HCT116 (cell line): ENCODE measurements at regions of chr4 and their contacts with region 1.

Region 1: GRCh38 chr4:74499986-74500781 is 55.2 kb downstream of the AREG start:
- DNase-seq: no peak
- ATAC-seq: no peak
- H3K4me3 ChIP-seq: no peak overlapping the region
- H3K27ac ChIP-seq: no peak overlapping the region
- H3K4me1 ChIP-seq: peaks cover 0 to 5% of the 10 kb centered on the region in 2 experiments; a peak in 1 of 4 replicates
- H3K27me3 ChIP-seq: no peaks in the 10 kb centered on the region
- CTCF ChIP-seq: no peak
- POLR2A ChIP-seq: no peak
- RAD21 ChIP-seq: no peak

Region 2: DNA sequence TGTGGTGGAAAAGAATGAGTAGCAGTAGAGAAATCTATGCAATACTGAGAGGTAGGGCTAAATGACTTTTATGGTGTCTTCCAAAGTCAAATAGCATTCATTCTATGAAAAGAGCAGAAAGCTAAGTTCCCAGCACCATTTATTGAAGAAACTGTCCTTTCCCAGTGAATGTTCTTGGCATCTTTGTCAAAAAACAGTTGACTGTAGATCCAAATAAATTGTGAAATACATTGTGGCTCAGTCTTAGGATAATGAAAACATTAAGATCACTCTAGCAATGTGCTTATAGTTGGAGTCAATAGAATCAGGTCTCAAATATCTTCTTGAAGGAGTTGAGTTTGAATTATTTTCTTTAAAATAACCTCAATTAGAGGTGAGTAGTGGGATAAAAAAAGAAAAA is 35.9 kb before region 1 on chr4:
- CTCF ChIA-PET with region 1: no interaction called
- POLR2A ChIA-PET with region 1: no interaction called
- RAD21 ChIA-PET with region 1: no interaction called
- intact Hi-C with region 1: loop called (anchors 5 kb)
- DNase-seq: no peak
- ATAC-seq: no peak
- H3K4me3 ChIP-seq: no peak overlapping the region
- H3K27ac ChIP-seq: no peak overlapping the region
- H3K4me1 ChIP-seq: no peaks in the 10 kb centered on the region
- H3K27me3 ChIP-seq: no peaks in the 10 kb centered on the region
- CTCF ChIP-seq: no peak
- POLR2A ChIP-seq: no peak
- RAD21 ChIP-seq: no peak

Region 3: DNA sequence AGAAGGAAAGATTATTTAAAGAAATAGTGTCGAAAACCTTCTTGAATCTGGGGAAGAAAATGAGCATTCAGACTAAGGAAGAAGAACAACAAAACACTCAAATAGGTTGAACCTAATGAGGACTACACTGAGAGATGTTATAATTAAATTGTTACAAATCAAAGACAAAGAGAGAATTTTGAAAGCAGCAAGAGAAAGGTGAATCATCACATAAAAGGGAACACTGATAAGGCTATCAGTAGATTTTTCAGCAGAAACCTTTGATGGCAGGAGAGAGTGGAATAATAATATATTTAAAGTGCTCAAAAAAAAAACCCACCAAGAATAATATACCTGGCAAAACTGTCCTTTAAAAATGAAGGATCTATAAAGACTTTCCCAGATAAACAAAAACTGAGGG is 59.7 kb after region 1 on chr4:
- CTCF ChIA-PET with region 1: no interaction called
- POLR2A ChIA-PET with region 1: no interaction called
- RAD21 ChIA-PET with region 1: no interaction called
- intact Hi-C with region 1: no loop called
- DNase-seq: no peak
- ATAC-seq: no peak
- H3K4me3 ChIP-seq: no peak overlapping the region
- H3K27ac ChIP-seq: peak overlapping the region; percentile 42; the same call in 1 of the 2 replicates
- H3K4me1 ChIP-seq: peaks cover 6 to 26% of the 10 kb centered on the region in 2 experiments
- H3K27me3 ChIP-seq: no peaks in the 10 kb centered on the region
- CTCF ChIP-seq: no peak
- POLR2A ChIP-seq: no peak
- RAD21 ChIP-seq: no peak